ENCODE measurements at regions of chr3 and their contacts with region 1.

Region 1: GRCh38 chr3:64321747-64322146 is 96.5 kb upstream of the PRICKLE2 start:
- DNase-seq: no peak
- H3K4me3 ChIP-seq: no peak overlapping the region
- H3K27ac ChIP-seq: no peak overlapping the region
- H3K4me1 ChIP-seq: peaks cover 0 to 3% (median 0%) of the 10 kb centered on the region in 4 experiments; a peak in 2 of 7 replicates
- H3K27me3 ChIP-seq: no peaks in the 10 kb centered on the region
- CTCF ChIP-seq: no peak
- EP300 ChIP-seq: no peak
- POLR2A ChIP-seq: no peak
- RAD21 ChIP-seq: no peak

Region 2: GRCh38 chr3:64308931-64309330 is 12.8 kb before region 1 on chr3:
- CTCF ChIA-PET with region 1: interaction called, 11 read pairs
- POLR2A ChIA-PET with region 1: interaction called, 3 read pairs
- DNase-seq: no peak
- H3K4me3 ChIP-seq: no peak overlapping the region
- H3K27ac ChIP-seq: no peak overlapping the region
- H3K4me1 ChIP-seq: no peaks in the 10 kb centered on the region
- H3K27me3 ChIP-seq: no peaks in the 10 kb centered on the region
- CTCF ChIP-seq: no peak
- EP300 ChIP-seq: no peak
- POLR2A ChIP-seq: no peak
- RAD21 ChIP-seq: no peak

Region 3: DNA sequence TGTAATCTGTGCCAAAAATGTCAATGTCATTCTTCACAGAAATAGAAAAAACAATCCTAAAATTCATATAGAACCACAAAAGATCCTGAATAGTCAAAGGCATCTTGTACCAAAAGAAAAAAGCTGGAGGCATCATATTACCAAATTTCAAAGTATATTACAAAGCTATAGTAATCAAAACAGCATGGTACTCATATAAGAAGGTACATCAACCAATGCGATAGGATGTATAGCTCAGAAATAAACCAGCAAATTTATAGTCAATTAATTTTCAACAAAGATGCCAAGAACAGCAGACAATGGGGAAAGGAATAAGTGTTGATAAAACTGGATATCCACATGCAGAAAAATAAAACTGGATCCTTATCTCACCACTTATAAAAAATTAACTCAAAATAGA is 54.0 kb after region 1 on chr3:
- CTCF ChIA-PET with region 1: no interaction called
- POLR2A ChIA-PET with region 1: no interaction called
- DNase-seq: no peak
- H3K4me3 ChIP-seq: no peak overlapping the region
- H3K27ac ChIP-seq: no peak overlapping the region
- H3K4me1 ChIP-seq: no peaks in the 10 kb centered on the region
- H3K27me3 ChIP-seq: no peaks in the 10 kb centered on the region
- CTCF ChIP-seq: no peak
- EP300 ChIP-seq: no peak
- POLR2A ChIP-seq: no peak
- RAD21 ChIP-seq: no peak

Region 4: DNA sequence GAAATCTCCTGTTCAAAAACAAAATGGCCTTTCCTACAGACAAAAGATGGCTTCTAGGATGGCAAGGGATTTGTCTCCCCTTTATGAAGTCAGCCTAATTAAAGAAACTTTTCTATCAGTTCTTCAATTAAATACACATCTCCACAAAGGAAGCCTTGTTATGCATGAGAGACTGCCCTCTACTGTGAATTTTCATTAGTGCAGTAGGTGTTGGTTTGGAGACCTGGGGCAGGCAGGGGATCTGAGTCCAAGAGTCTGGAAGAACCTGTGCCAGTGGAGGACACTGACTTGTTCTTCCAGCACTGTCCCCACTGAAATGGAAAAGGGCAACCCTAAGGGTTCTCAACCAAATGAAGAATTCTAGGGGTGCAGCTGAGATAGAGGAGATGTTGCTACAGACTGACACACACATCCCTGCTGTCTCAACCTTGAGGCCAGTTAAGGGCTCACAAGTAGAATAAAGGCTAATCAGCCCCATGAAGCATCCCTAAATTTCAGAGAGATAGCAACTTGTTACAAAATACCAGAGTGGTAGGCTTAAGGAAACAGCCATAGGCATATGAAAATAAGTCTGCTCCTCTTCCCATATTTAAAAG is 77.6 kb after region 1 on chr3:
- CTCF ChIA-PET with region 1: interaction called, 10 read pairs
- POLR2A ChIA-PET with region 1: no interaction called
- DNase-seq: no peak
- H3K4me3 ChIP-seq: no peak overlapping the region
- H3K27ac ChIP-seq: no peak overlapping the region
- H3K4me1 ChIP-seq: peaks cover 0 to 7% (median 1%) of the 10 kb centered on the region in 4 experiments; a peak in 4 of 7 replicates
- H3K27me3 ChIP-seq: no peaks in the 10 kb centered on the region
- CTCF ChIP-seq: peak in 2 of 3 experiments; percentile 74 to 77; a peak in 3 of 4 replicates
- EP300 ChIP-seq: no peak
- POLR2A ChIP-seq: no peak
- RAD21 ChIP-seq: peak; percentile 83 to 86

Region 5: GRCh38 chr3:64508140-64508539 is 186.4 kb after region 1 on chr3:
- CTCF ChIA-PET with region 1: no interaction called
- POLR2A ChIA-PET with region 1: no interaction called
- DNase-seq: no peak
- H3K4me3 ChIP-seq: no peak overlapping the region
- H3K27ac ChIP-seq: no peak overlapping the region
- H3K4me1 ChIP-seq: no peaks in the 10 kb centered on the region
- H3K27me3 ChIP-seq: no peaks in the 10 kb centered on the region
- CTCF ChIP-seq: no peak
- EP300 ChIP-seq: no peak
- POLR2A ChIP-seq: no peak
- RAD21 ChIP-seq: no peak